ENCODE measurements at regions of chr12 and their contacts with region 1.

Region 1: DNA sequence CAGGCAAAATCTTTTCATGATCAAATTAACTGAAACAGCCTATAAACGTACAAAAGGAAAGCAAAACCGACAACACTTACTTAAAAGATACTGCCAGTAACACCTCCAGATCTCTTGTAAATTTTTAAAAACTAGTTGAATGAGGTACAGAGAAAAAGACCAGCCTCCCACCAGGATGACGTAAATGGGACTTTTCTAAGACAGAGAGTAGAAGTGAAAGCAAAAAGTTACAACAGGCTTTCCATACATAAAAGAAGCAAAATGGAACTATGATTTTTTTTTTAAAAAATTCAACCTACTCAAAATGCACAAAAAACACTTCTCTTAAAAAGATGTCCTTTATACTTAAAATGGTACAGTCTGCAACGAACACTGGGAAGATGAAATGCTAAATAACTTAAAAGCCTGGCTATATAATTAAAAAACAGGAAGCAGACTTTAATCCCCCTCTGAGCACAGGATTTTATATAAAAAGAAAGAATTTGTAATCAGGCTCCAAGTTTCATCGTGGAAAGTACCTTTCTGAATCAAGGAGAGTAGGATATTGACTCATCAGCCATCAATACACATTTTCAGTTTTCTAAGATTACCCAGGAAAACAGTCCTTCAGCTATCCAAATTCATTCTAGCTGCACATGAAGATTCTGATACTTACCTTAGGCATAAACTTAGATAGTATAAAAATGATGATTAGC is 14.2 kb upstream of the MYO1A start:
- DNase-seq: no peak
- H3K4me3 ChIP-seq: no peak overlapping the region
- H3K4me3 Mint-ChIP-seq: no peak overlapping the region
- H3K27ac Mint-ChIP-seq: no peak overlapping the region
- H3K4me1 ChIP-seq: no peaks in the 10 kb centered on the region
- H3K4me1 Mint-ChIP-seq: no peaks in the 10 kb centered on the region
- H3K27me3 ChIP-seq: no peaks in the 10 kb centered on the region
- H3K27me3 Mint-ChIP-seq: no peaks in the 10 kb centered on the region
- CTCF ChIP-seq: no peak

Region 2: DNA sequence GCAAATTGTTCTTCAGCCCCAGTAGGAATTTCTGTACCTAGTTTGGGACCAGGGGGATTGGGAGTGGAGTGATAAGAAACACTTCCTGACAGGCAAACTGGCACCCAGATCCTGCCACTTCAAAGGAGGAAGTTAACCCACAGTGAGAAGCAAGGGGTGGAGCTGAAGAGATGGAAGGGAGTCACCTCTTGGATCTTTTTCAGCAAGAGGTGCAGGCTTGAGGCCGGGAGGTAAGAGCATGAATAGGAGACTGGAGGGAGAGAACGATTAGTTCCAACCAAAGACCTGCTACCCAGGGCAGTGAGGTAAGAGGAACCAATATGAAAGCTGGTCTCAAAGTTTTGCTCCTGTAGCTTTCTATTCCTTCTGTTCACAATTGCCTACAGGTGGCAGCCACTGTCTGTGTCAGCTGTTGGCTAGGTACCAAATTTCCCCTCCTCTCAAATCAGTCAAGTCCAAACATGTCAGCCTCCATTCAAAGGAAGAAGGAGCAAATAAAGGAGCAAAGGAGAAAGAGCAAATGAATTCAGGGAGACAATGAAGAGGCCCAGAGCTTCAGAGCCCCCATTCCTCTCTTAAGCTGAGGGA is 32.9 kb before region 1 on chr12:
- CTCF ChIA-PET with region 1: interaction called, 9 read pairs
- POLR2A ChIA-PET with region 1: no interaction called
- intact Hi-C with region 1: loop called (anchors 1 kb)
- DNase-seq: no peak
- H3K4me3 ChIP-seq: no peak overlapping the region
- H3K4me3 Mint-ChIP-seq: no peak overlapping the region
- H3K27ac Mint-ChIP-seq: no peak overlapping the region
- H3K4me1 ChIP-seq: no peaks in the 10 kb centered on the region
- H3K4me1 Mint-ChIP-seq: peaks cover 8% of the 10 kb centered on the region
- H3K27me3 ChIP-seq: no peaks in the 10 kb centered on the region
- H3K27me3 Mint-ChIP-seq: no peaks in the 10 kb centered on the region
- CTCF ChIP-seq: peak in 1 of 2 experiments; percentile 36

Region 3: DNA sequence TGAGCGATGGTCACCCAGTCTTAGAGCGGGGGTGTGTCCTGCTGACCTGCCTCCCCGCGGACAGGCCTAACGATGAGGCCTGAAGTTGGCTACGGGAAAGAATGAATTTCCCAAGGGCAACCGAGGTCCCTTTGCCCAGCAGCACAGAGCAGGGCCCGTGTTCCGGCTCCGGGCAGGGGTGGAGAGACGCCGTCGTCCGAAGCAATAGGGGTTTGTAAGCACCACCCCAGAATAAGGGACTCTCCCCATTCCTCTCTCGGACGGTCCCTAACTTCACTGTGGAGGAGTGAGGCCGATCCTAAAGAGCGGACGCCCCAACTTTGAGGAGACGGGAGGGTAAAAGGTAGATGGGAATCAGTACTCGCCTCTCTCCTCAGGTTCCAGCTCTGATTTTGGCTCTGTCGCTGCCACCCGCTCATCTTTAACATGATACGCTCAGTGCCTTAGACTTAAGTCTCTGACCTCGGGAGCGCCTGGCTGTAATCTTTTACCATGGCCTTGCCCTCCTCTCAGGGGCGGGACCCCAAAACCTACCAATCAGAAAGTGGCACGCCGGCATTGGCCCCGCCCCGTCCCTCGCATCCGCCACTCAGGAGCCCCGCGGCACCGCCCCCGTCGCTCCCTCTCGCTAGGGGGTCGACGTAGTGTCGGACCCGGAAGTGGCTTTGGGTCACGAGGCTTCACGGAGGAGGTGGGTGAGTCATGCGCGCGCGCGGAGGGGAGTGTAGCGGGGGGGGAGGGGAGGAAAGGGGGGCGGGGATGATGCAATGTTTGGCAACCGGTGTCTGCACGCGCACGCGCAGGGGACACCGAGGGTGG is 456.1 kb after region 1 on chr12 and contains the start of gene DDIT3:
- CTCF ChIA-PET with region 1: no interaction called
- POLR2A ChIA-PET with region 1: no interaction called
- intact Hi-C with region 1: no loop called
- DNase-seq: peak; percentile 99
- H3K4me3 ChIP-seq: peak within 1 kb of the TSS; percentile 71
- H3K4me3 Mint-ChIP-seq: peak within 1 kb of the TSS; percentile 86
- H3K27ac Mint-ChIP-seq: peak within 1 kb of the TSS; percentile 94
- H3K4me1 ChIP-seq: peaks cover 33% of the 10 kb centered on the region
- H3K4me1 Mint-ChIP-seq: peaks cover 29% of the 10 kb centered on the region
- H3K27me3 ChIP-seq: no peaks in the 10 kb centered on the region
- H3K27me3 Mint-ChIP-seq: no peaks in the 10 kb centered on the region
- CTCF ChIP-seq: no peak
- total RNA-seq, gene DDIT3: 62.7 and 79.2 TPM in 2 replicates